Activated CD4-positive, alpha-beta memory T cell treated with anti-CD3 and anti-CD28 coated beads for 36 hours (primary cell): ENCODE measurements at regions of chr16 and their contacts with region 1.

Region 1: DNA sequence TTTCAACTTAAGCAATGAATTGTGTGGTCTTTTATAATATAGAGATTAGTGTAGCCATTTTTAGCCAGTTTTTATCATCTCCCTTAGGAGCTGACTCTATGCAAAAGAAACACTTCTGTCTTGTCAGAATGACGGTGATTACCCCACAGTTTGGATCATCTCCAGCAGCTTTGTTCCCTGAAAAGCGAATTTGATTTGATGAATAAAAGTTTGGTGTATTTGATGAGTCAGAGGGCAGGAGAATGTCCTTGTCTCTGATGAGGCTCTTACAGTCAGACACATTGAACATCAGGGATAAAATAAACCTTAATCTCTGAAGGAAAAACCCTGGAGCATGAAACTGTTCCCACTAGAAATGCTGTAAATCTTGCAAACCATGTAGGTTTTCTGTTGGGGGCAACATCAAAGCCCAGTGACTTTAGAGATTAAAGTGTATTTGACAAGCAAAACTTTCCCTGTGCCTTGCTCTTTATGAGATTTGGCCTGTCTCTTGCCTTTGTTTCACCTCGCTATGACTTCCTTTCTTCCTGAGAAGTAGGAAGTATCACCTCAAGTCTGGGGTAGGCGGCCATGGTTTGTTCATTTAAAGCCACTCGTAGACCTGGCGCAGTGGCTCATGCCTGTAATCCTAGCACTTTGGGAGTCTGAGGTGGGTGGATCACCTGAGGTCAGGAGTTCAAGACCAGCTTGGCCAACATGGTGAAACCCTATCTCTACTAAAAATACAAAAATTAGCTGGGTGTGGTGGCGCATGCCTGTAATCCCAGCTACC is 209.3 kb downstream of the FTO start:
- DNase-seq: peak; percentile 50
- H3K4me3 Mint-ChIP-seq: no peak overlapping the region
- H3K27ac Mint-ChIP-seq: peak overlapping the region; percentile 79
- H3K4me1 Mint-ChIP-seq: peaks cover 7% of the 10 kb centered on the region
- H3K27me3 Mint-ChIP-seq: no peaks in the 10 kb centered on the region

Region 2: GRCh38 chr16:53865494-53865863 is 47.8 kb before region 1 on chr16:
- CTCF ChIA-PET with region 1: no interaction called
- POLR2A ChIA-PET with region 1: no interaction called
- intact Hi-C with region 1: loop called (anchors 2 kb)
- DNase-seq: no peak
- H3K4me3 Mint-ChIP-seq: no peak overlapping the region
- H3K27ac Mint-ChIP-seq: peak overlapping the region; percentile 52
- H3K4me1 Mint-ChIP-seq: peaks cover 14% of the 10 kb centered on the region
- H3K27me3 Mint-ChIP-seq: no peaks in the 10 kb centered on the region

Region 3: DNA sequence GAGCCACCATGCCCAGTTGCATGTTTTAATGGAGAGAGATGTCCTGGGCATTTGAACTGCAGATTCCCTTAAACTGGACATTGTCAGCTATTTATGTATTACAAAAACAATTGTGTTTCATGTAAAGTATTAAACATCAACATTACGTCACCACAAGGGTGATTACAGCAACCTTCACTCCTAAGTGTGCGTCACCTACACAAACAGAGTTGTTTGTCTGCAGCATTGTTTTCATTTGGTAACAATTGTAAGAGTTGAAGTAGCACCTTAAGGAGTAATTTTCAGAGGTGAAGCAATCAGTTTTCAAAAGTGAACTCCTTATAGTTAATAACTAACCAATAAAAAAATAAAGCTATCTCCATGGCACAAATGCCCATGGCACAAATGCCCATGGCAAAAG is 101.9 kb after region 1 on chr16:
- CTCF ChIA-PET with region 1: no interaction called
- POLR2A ChIA-PET with region 1: no interaction called
- intact Hi-C with region 1: no loop called
- DNase-seq: no peak
- H3K4me3 Mint-ChIP-seq: no peak overlapping the region
- H3K27ac Mint-ChIP-seq: no peak overlapping the region
- H3K4me1 Mint-ChIP-seq: no peaks in the 10 kb centered on the region
- H3K27me3 Mint-ChIP-seq: no peaks in the 10 kb centered on the region